ENCODE measurements at regions of chr1 and their contacts with region 1.

Region 1: GRCh38 chr1:226121587-226122400 is 59.3 kb downstream of the H3-3A start:
- DNase-seq: peak; percentile 86
- ATAC-seq: peak; percentile 57
- H3K4me3 ChIP-seq: peak overlapping the region; percentile 73
- H3K27ac ChIP-seq: peak overlapping the region; percentile 86
- H3K4me1 ChIP-seq: peaks cover 35% of the 10 kb centered on the region
- H3K27me3 ChIP-seq: no peaks in the 10 kb centered on the region
- CTCF ChIP-seq: peak; percentile 77

Region 2: DNA sequence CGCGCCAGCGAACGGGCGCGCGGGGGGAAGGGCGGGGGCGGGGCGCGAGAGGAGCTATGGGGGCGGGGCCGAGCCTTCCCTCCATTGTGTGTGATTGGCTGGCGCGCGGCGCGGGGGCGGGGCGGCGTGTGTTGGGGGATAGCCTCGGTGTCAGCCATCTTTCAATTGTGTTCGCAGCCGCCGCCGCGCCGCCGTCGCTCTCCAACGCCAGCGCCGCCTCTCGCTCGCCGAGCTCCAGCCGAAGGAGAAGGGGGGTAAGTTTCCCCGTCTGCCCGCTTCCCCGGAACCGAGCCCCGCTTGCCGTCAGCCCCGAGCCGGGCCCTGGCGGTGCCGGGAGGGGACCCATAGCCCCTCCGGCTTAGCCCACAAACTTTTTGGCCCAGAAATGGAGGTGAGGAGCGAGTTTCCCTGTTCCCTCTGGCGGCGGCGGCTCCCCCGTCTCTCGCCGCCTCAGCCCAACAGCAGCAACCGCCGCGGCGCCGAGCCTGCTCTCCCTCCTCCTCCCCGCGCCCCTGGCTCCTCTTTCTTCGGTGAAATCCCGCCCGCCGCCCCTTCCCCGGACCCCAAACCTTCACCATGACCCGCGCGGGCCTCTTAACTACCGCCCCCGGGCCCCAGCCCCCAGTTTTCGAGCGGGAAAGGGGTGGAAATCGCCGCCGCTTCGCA is 59.1 kb before region 1 on chr1 and contains the start of gene H3-3A:
- CTCF ChIA-PET with region 1: interaction called, 20 read pairs
- POLR2A ChIA-PET with region 1: interaction called, 3 read pairs
- intact Hi-C with region 1: loop called (anchors 1 kb)
- DNase-seq: peak; percentile 96
- ATAC-seq: peak; percentile 77
- H3K4me3 ChIP-seq: peak within 1 kb of the TSS; percentile 97
- H3K27ac ChIP-seq: peak within 1 kb of the TSS; percentile 85
- H3K4me1 ChIP-seq: peaks cover 23% of the 10 kb centered on the region
- H3K27me3 ChIP-seq: no peaks in the 10 kb centered on the region
- CTCF ChIP-seq: no peak
- total RNA-seq, gene H3-3A: 196 and 273 TPM in 2 replicates

Region 3: DNA sequence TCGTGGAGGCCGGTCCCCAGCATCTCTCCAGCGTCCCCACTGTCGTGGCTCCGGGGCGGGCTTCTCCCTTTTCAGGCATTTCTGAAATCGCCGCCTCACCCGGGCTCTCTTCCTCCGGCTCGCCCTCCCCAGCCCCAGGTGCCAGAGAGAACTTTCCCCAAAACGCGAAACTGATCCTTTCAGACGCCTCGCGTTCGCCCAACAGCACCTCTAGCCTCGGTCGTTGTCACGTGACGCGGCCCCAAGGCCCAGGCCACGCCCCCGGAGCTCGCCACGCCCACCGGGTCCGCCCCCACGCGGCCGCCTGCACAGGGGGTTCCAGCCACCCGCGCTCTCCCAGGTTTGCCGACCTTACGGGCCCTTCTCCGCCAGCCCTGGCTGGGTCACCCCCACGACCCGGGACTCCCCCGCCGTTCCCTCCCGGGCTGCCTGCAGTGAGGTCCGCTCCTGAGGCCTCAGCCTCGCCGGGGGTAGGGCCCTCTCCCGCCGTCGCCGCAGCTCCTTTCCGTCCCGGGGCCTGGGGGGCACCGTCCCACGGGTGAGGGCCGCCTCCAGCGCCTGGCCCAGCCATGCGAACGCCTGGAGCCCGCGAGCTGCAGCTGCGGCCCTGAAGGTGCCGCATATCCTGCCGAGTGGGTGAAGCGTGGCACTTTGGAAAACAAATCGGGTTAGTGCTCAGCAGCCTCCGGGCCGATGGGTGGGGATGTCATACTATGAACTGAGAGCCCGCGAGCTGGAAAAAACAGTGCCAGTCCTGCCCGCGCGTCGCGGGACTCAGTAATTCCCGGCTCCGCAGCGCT is 38.3 kb before region 1 on chr1:
- CTCF ChIA-PET with region 1: no interaction called
- POLR2A ChIA-PET with region 1: interaction called, 5 read pairs
- intact Hi-C with region 1: loop called (anchors 5 kb)
- DNase-seq: peak; percentile 90
- ATAC-seq: peak; percentile 89
- H3K4me3 ChIP-seq: peak overlapping the region; percentile 84
- H3K27ac ChIP-seq: peak overlapping the region; percentile 58
- H3K4me1 ChIP-seq: peaks cover 10% of the 10 kb centered on the region
- H3K27me3 ChIP-seq: no peaks in the 10 kb centered on the region
- CTCF ChIP-seq: no peak; the same call in 1 of the 2 replicates

Region 4: GRCh38 chr1:226186124-226187018 is 64.6 kb after region 1 on chr1 and contains the start of gene ACBD3:
- CTCF ChIA-PET with region 1: interaction called, 8 read pairs
- POLR2A ChIA-PET with region 1: interaction called, 6 read pairs
- intact Hi-C with region 1: loop called (anchors 2 kb)
- DNase-seq: peak; percentile 95
- ATAC-seq: peak; percentile 94
- H3K4me3 ChIP-seq: peak within 1 kb of the TSS; percentile 80
- H3K27ac ChIP-seq: peak within 1 kb of the TSS; percentile 42
- H3K4me1 ChIP-seq: peaks cover 27% of the 10 kb centered on the region
- H3K27me3 ChIP-seq: no peaks in the 10 kb centered on the region
- CTCF ChIP-seq: 0 out of 2 replicates have a peak, but pooled peaks have one; percentile 12
- total RNA-seq, gene ACBD3: 62.2 and 62.9 TPM in 2 replicates

Region 5: DNA sequence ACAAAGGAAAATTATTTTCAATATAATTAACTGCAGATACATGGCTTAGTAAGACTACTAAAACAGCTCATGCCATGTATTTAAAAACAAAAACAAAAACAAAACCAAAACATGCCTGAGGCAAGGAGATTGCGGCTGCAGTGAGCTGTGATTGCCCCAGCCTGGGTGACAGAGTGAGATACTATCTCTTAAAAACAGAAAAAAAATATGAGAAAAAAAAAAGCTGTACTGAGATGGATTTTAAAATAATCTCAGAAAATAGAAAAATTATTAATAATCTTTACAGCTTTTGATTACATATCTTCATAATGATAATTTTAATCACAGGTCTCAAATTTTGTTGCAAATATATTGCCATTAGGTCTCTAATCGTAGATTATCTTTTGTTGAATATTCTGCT is 211.2 kb after region 1 on chr1:
- CTCF ChIA-PET with region 1: interaction called, 26 read pairs
- POLR2A ChIA-PET with region 1: no interaction called
- intact Hi-C with region 1: loop called (anchors 1 kb)
- DNase-seq: no peak
- ATAC-seq: peak; percentile 36
- H3K4me3 ChIP-seq: peak overlapping the region; percentile 61
- H3K27ac ChIP-seq: no peak overlapping the region
- H3K4me1 ChIP-seq: peaks cover 8% of the 10 kb centered on the region
- H3K27me3 ChIP-seq: no peaks in the 10 kb centered on the region
- CTCF ChIP-seq: no peak

Measured in PC-3 (cell line).